Dendritic cell treated with granulocyte-macrophage colony-stimulating factor and Interleukin-4, amounts not matched to agents 40 ng/mL and 50 ng/mL, for 4 days (primary cell): ENCODE measurements at regions of chr6 and their contacts with region 1.

Region 1: DNA sequence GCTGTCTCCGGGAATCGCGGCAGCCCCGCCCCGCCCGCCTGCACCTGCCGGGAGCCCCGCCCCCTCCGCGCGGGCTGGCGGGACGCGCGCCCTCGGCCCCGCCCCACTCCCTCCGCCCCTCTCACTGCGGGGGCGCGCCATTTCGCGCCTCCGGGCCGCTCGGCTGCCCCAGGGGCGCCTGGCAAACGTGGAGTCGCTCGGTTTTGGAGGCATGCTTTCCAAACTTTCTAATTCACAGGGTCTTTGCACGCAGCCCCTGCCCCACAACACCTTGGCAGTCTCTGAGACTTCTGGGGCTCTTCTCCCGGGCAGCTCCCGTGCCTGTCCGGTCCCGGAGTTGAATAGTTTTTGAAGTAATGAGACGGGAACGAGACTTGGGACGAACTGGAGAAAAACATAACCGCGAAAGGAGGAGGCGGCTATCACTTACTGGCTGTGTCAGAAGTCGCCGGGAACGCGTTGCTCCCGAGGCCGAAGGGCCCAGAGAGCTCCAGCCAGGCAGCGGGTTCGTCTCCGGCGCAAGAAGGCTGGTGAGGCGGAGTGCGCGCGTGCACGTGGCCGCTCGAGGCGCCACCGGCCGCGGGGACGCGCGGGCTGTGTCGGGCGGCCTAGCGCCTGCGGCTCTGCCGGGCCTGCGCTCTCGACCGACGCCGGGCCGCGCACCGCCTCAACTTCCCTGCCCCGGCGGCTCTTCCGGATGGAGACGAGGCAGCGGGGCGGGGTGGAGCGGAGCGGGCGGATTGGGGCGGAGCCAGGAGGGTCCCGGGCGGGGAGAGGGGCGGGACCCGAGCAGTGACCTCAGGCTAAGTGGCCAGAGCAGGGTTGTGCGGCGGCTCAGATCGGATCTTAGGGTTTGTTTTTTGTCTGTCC is at the start of gene MCM9:
- H3K4me3 Mint-ChIP-seq: peak within 1 kb of the TSS; percentile 89
- H3K27ac Mint-ChIP-seq: peak within 1 kb of the TSS; percentile 95
- H3K4me1 Mint-ChIP-seq: peaks cover 31% of the 10 kb centered on the region
- H3K27me3 Mint-ChIP-seq: no peaks in the 10 kb centered on the region

Region 2: DNA sequence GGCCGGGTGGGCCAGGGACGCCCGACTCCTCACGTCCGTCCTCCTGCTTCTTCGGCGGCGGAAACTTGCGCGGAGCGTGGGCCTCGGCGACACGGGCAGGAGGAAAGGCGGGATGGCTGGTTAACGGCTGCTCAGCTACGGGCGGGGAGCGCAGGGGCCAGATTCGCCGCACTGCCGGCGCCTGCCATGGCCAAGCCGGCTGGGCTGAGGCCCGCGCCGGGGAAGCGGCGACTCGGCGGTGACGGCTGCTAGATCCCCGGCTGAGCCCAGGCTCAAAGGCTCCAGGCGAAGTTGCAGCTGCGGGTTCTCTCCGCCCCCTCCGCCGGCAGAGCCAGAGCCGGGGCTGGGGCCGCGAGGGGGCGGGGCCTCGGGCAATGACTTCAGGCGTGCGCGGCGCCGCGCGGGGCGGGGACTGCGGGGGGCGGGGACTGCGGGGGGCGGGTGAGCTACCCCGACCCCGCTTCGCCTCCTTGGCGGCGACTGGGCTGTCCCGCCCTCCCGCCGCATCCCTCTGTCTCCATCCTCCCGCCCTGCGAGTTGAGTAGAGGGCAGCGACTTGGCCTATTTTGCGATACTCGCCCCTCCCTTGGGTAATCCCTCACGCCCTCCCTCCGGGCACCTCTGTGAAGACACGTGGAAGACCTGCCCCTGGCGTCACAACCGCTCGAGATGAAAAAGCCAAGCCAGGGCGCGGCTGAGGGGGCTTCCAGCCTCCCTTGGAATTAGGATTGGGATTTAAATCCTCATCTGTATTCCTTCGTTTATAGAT is 283.2 kb before region 1 on chr6 and contains the start of gene CEP85L:
- intact Hi-C with region 1: loop called (anchors 2 kb)
- H3K4me3 Mint-ChIP-seq: peak within 1 kb of the TSS; percentile 90
- H3K27ac Mint-ChIP-seq: peak within 1 kb of the TSS; percentile 90
- H3K4me1 Mint-ChIP-seq: peaks cover 14% of the 10 kb centered on the region
- H3K27me3 Mint-ChIP-seq: peaks cover 7% of the 10 kb centered on the region

Region 3: GRCh38 chr6:118893807-118894424 is 40.8 kb before region 1 on chr6 and contains the start of gene ASF1A:
- intact Hi-C with region 1: loop called (anchors 1 kb)
- H3K4me3 Mint-ChIP-seq: peak within 1 kb of the TSS; percentile 88
- H3K27ac Mint-ChIP-seq: peak within 1 kb of the TSS; percentile 96
- H3K4me1 Mint-ChIP-seq: peaks cover 45% of the 10 kb centered on the region
- H3K27me3 Mint-ChIP-seq: no peaks in the 10 kb centered on the region

Region 4: DNA sequence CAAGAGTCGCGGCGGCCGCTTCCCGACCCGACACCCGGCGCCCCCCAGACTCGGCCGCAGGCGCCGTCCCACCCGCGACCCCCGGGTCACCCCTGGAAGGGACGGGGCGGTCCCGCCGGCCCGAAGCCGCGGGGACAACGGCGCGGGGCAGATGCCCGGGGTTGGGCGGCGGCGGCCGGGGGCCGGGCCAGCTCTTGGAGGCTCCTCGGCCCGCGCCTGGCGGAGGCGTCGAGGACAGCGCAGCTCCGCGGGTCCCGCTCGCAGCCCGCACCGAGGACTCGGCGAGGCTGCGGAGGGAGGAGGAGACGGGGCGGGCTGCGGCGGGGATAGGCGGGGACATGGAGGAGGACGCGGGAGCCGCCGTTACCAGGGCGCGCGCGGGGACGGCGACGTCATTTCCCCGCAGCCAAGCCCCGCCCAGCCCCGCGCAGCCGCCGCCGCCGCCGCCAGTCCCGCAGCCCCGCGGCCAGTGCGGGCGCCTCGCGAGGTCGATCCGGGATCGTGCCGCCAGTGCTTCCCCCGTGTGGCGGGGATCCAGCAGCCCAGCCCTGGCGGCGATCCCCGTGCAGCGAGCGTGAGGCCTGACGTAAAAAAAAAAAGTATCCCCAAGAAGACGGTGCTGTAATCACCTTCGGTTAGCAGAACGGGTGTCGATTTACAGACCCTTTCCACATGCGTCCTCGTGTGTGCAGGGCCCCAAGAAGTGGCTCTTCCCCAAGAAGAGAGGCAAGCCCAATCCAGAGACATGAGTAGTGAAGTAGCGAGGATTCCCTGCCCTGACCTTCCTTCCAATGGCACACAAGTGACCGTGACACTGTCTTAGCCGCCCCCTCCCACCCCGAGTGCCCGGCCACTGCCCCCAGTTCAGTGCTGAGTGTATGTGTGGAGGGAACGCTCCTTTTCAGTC is 143.9 kb after region 1 on chr6 and contains the start of gene FAM184A:
- intact Hi-C with region 1: loop called (anchors 10 kb)
- H3K4me3 Mint-ChIP-seq: peak within 1 kb of the TSS; percentile 85
- H3K27ac Mint-ChIP-seq: peak within 1 kb of the TSS; percentile 73
- H3K4me1 Mint-ChIP-seq: peaks cover 9% of the 10 kb centered on the region
- H3K27me3 Mint-ChIP-seq: peaks cover 44% of the 10 kb centered on the region